ENCODE measurements at regions of chr15 and their contacts with region 1.

Region 1: GRCh38 chr15:101251830-101252820 is at the start of gene CHSY1:
- H3K4me3 Mint-ChIP-seq: peak within 1 kb of the TSS; percentile 97
- H3K27ac Mint-ChIP-seq: peak within 1 kb of the TSS; percentile 91
- H3K4me1 Mint-ChIP-seq: peaks cover 41% of the 10 kb centered on the region
- H3K27me3 Mint-ChIP-seq: peaks cover 7% of the 10 kb centered on the region

Region 2: GRCh38 chr15:101127506-101128076 is 124.5 kb before region 1 on chr15:
- intact Hi-C with region 1: loop called (anchors 10 kb)
- H3K4me3 Mint-ChIP-seq: peak overlapping the region; percentile 44
- H3K27ac Mint-ChIP-seq: peak overlapping the region; percentile 89
- H3K4me1 Mint-ChIP-seq: peaks cover 83% of the 10 kb centered on the region
- H3K27me3 Mint-ChIP-seq: peaks cover 1% of the 10 kb centered on the region

Measured in dendritic cell treated with granulocyte-macrophage colony-stimulating factor and Interleukin-4, amounts not matched to agents 40 ng/mL and 50 ng/mL, for 4 days (primary cell).